AG04449 (cell line): ENCODE measurements at regions of chr19 and their contacts with region 1.

Region 1: DNA sequence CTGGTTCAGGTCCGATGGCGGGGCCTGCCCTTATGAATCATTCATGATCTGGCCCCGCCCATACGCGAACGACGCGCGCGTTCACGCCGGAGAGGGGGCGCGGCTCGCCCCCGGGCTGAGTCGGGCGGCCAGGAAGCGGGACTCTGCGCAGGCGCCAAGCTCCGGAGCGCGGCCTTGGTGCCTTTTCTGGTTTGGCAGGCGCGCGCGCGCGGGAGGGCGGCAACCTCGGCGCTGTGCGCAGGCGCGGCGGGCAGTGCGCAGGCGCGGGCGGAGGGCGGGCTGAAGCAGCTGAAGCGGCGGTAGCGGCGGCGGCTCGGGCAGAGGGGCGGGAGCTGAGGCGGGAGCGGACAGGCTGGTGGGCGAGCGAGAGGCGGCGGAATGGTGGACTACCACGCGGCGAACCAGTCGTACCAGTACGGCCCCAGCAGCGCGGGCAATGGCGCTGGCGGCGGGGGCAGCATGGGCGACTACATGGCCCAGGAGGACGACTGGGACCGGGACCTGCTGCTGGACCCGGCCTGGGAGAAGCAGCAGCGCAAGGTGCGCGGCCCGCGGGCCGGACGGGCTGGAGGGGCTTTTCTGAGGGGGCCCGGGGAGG is at the start of gene ACTN4:
- DNase-seq: no peak
- H3K4me3 ChIP-seq: peak within 1 kb of the TSS; percentile 98
- CTCF ChIP-seq: no peak

Region 2: DNA sequence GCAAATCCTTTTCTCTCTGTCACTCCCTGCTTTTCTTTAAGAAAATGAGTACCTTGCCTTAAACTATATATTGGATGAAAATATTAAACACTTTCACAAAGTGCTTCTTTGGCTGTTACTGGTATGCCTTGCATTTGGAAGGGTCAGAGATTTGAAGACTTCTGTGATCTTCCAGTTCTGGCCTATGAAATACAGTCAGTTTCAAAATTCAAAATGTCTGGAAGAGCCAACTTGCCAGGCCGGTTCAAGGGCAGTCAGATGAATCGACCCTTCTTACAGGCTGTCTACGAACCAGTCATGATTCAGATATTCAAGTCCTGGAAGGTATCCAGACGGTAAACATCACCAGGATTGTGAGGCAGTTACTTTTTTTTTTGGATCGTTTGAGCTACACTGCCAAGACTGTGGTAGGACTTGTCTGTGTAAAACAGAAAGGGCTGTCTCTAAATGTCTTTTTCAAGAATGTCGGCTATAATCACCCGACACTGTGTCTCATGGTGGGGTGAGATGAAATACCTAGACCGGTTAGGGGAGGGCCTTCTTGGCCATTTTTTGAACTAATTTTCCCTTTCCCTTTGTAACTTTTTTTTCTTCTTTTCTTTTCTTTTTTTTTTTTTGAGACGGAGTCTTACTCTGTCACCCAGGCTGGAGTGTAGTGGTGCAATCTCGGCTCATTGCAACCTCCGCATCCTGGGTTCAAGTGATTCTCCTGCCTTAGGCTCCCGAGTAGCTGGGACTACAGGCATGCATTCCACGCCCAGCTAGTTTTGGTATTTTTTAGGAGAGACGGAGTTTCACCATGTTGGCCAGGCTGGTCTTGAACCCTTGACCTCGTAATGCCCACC is 11.2 kb after region 1 on chr19:
- CTCF ChIA-PET with region 1: interaction called, 4 read pairs
- POLR2A ChIA-PET with region 1: interaction called, 27 read pairs
- DNase-seq: peak; percentile 99
- H3K4me3 ChIP-seq: no peak overlapping the region; the same call in none of the 2 replicates
- CTCF ChIP-seq: no peak

Region 3: DNA sequence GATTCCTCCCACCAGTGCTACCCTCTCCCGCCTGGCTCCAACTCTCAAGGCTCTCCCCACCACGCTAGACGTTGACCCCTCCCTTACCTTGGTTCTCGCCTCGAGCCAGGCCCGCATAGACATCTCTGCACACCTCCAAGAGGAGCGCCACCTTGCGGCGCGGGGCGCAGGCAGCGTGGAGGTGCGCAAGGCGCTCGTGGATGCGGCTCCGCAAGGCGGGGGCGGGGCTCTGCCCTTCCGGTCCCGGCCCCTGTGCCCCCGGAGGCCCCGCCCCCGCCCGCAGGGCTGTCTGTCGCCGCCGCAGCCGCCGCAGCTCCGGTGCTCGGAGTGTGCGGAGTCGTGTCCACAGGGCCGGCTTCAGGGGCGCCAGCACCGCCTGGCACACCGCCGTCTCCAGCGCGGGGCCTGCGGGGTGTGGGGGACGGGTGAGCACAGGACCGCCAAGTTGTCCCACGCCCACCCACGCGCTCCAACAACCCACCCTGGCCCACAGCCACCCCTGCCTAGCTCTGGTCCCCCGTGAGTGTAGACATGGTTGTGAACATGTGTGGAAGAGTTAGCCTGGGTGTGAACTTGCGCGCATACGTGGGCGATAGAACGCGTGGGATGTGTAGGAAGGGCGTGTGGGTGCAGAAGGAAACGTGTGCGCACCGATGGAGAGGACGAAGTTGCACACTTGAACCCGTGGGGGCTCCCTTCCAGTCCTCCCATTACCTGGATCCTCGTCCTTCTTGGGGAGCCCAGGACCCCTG is 222.6 kb after region 1 on chr19:
- CTCF ChIA-PET with region 1: no interaction called
- POLR2A ChIA-PET with region 1: no interaction called
- DNase-seq: no peak
- H3K4me3 ChIP-seq: peak overlapping the region; percentile 59
- CTCF ChIP-seq: peak; percentile 85